Activated naive CD4-positive, alpha-beta T cell treated with anti-CD3 and anti-CD28 coated beads, Interleukin-2, amount 10 ng/mL, durations not matched to agents 7 days and 5 days (primary cell): ENCODE measurements at regions of chr3 and their contacts with region 1.

Region 1: DNA sequence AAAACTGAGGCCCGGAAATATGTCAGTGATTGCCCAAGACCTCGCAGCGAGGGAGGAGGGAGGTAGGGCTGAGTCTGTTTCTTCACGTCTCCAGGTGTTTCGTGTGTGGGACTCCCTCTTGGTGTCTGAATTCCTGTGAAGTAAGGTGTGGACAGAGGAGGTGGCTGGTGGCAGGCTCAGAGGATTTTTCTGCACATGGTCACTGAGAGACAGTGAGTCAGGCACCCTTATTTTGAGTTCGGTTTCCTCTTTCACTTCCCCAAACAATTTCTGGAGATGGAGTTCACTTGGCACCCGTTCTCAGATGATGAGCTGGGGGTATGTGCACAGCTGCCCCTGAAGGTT is 46.3 kb upstream of the VPS8 start:
- DNase-seq: no peak
- H3K4me3 Mint-ChIP-seq: no peak overlapping the region
- H3K27ac Mint-ChIP-seq: no peak overlapping the region
- H3K4me1 Mint-ChIP-seq: peaks cover 7% of the 10 kb centered on the region
- H3K27me3 Mint-ChIP-seq: peaks cover 44% of the 10 kb centered on the region

Region 2: GRCh38 chr3:184561061-184561912 is 204.4 kb before region 1 on chr3 and contains the start of gene EPHB3:
- CTCF ChIA-PET with region 1: interaction called, 18 read pairs
- DNase-seq: peak; percentile 93
- H3K4me3 Mint-ChIP-seq: peak within 1 kb of the TSS; percentile 30
- H3K27ac Mint-ChIP-seq: peak within 1 kb of the TSS; percentile 30
- H3K4me1 Mint-ChIP-seq: peaks cover 35% of the 10 kb centered on the region
- H3K27me3 Mint-ChIP-seq: peaks cover 88% of the 10 kb centered on the region

Region 3: DNA sequence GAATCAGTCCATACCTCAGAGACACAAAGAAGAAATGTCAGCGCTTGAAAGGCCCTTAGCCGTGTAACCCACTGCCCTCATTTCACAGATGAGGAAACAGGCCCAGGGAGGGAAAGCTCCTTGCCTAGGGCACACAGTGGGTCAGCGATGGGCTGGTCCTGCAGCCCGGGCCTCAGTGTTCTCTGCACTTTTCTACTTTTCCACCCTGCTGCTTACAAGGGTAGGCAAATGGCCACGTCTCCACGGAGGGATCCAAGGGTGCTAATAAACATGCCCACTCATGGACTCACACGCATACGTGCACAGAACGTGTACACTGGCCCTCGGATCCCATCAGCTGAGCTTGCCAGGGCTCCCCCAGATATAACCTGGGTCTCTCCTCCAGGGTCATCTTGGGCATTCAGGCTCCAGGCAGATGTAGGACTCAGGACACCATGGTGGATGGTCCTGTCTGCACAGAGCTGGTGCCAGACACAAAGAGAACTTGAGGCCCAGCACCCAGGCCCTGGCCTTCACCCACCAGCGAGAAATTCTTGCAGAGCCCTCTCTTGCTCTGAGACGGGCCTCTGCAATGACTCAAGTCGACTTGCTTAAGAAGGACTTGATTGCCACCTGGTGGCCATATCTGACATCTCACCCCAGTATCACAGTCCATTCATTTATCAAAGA is 11.8 kb after region 1 on chr3:
- CTCF ChIA-PET with region 1: interaction called, 23 read pairs
- DNase-seq: peak; percentile 92
- H3K4me3 Mint-ChIP-seq: no peak overlapping the region
- H3K27ac Mint-ChIP-seq: no peak overlapping the region
- H3K4me1 Mint-ChIP-seq: no peaks in the 10 kb centered on the region
- H3K27me3 Mint-ChIP-seq: peaks cover 48% of the 10 kb centered on the region